Posterior vena cava (tissue), 2 donors: ENCODE measurements at regions of chr10 and their contacts with region 1.

Region 1: GRCh38 chr10:97869091-97870042 is 19.7 kb downstream of the GOLGA7B start:
- DNase-seq: peak; percentile 90

Region 2: DNA sequence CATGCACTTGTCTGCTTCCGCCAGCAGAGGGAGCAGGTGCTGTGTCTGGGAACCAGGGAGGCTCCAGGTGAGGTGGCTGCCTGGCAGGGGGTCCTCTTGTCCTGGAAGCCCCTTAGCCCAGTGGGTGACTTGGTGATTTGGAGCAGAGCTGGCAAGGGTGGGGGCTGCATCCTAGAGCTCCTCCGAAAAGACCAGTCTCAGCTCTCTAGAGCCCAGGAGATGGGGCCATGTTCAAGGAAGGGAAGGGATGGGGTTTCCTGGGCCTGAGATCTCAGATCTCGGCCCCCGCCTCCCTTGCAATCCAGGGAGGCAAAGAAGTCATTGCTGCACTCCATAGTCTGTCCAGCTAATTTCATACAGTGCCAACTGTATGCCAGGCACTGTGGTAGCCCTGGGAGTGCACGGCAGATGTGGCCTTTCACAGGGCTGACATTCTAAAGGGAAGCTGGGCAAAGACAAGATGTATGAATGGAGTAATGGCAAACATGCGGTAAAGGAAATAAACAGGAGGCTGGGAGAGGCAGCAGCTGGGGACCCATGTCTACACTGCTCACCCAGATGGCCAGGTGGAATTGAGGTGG is 77.1 kb before region 1 on chr10:
- intact Hi-C with region 1: loop called (anchors 5 to 10 kb)
- DNase-seq: no peak